OCI-LY7 (cell line): ENCODE measurements at regions of chr20 and their contacts with region 1.

Region 1: DNA sequence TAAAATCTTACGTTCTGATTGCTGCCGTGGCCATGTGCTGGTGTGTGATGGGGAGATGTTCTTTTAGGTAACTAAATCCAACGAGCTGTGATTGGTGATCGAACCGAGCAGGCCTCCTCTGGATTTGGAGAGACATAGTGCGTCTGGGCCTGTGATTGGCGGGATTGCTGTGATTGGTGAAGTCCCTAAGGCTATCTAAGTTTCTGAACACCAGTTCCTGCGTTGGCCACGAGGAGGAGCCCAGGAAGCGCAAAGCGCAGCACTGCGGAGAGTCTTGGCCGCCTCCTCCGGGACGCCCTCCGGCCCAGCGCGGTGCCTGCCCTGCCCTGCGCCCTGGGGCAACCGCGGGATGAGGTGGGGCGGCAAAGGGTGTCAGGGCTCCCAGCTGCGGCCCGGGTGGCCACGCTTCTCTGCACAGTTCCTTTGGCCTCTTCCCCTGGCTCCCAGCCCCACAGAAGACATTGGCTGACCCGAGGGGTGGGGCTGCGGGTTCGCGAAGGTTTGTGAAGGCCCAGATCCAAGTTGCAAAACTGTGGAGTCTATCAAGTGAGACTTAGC is 33.0 kb downstream of the HNF4A start:
- DNase-seq: peak; percentile 62
- H3K4me3 ChIP-seq: no peak overlapping the region
- H3K27ac ChIP-seq: no peak overlapping the region
- H3K4me1 ChIP-seq: no peaks in the 10 kb centered on the region
- CTCF ChIP-seq: peak; percentile 81

Region 2: GRCh38 chr20:44460795-44461141 is 72.2 kb after region 1 on chr20:
- CTCF ChIA-PET with region 1: no interaction called
- POLR2A ChIA-PET with region 1: no interaction called
- intact Hi-C with region 1: loop called (anchors 2 kb)
- DNase-seq: peak; percentile 56
- H3K4me3 ChIP-seq: no peak overlapping the region
- H3K27ac ChIP-seq: no peak overlapping the region
- H3K4me1 ChIP-seq: no peaks in the 10 kb centered on the region
- CTCF ChIP-seq: peak; percentile 86

Region 3: DNA sequence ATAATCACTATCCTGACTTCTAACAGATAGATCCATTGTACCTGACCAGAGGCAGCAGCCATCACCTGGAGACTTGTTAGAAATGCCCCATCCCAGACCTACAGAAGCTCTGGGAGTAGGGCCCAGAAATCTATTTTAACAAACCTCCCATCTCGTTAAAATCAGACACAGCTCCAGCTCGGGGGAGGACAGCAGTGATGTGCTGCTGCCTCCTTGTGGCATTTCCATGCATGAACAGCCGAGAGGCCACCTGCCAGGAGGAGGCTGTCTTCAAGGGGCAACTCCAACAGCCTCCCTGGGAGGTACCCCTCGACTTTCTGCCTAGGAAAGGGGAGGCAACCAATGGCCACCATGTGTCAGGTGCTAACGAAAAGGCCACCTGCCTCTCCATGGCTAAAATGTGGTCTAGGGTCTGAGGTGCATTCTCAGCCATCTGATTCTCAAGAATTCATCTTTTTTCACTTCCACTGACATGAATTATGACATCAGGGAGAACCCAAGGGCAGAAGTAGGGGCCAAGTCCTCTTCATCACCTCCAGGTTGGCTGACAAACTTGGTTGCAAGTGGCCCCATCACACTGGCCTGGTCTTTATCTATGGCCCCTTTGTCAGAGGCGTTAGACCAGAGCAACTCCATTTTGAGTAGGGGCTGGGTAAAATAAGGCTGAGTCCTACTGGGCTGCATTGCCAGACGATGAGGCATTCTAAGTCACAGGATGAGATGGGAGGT is 345.0 kb after region 1 on chr20:
- CTCF ChIA-PET with region 1: no interaction called
- POLR2A ChIA-PET with region 1: no interaction called
- intact Hi-C with region 1: loop called (anchors 2 kb)
- DNase-seq: peak; percentile 68
- H3K4me3 ChIP-seq: no peak overlapping the region
- H3K27ac ChIP-seq: no peak overlapping the region
- H3K4me1 ChIP-seq: peaks cover 27% of the 10 kb centered on the region
- CTCF ChIP-seq: peak; percentile 90